T-cell (primary cell): ENCODE measurements at regions of chr3 and their contacts with region 1.

Region 1: DNA sequence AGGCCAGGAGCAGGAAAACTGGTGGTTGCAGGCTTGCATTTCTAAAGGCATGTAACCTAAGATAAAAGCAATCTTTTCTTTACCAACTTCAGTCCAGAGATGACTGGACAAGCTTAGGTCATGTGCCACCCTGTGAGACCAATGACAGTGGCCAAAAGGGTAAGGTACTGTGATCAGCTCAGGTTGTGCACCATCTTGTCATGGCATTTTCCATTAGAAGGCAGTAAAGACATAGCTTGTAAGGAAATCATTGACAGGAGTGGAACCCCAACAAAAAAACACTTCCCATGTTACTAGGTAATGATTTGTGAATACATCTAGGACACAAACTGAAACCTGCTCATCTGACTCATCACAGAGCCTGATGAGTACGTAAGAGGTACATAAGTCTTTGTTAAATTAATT is 35.2 kb downstream of the SSR3 start:
- DNase-seq: no peak
- ATAC-seq: no peak
- H3K4me3 ChIP-seq: no peak overlapping the region
- H3K4me3 Mint-ChIP-seq: no peak overlapping the region
- H3K27ac ChIP-seq: no peak overlapping the region
- H3K27ac Mint-ChIP-seq: no peak overlapping the region
- H3K4me1 ChIP-seq: peaks cover 2 to 5% of the 10 kb centered on the region in 2 experiments
- H3K4me1 Mint-ChIP-seq: peaks cover 12 to 17% (median 12%) of the 10 kb centered on the region in 3 donors
- H3K27me3 ChIP-seq: peaks cover 0 to 7% of the 10 kb centered on the region in 2 experiments
- H3K27me3 Mint-ChIP-seq: peaks cover 20 to 30% of the 10 kb centered on the region in 2 donors

Region 2: GRCh38 chr3:156498307-156498706 is 21.5 kb before region 1 on chr3:
- CTCF ChIA-PET with region 1: no interaction called
- POLR2A ChIA-PET with region 1: no interaction called
- DNase-seq: no peak
- ATAC-seq: no peak
- H3K4me3 ChIP-seq: no peak overlapping the region
- H3K4me3 Mint-ChIP-seq: no peak overlapping the region
- H3K27ac ChIP-seq: no peak overlapping the region
- H3K27ac Mint-ChIP-seq: no peak overlapping the region
- H3K4me1 ChIP-seq: no peaks in the 10 kb centered on the region
- H3K4me1 Mint-ChIP-seq: peaks cover 0 to 5% (median 0%) of the 10 kb centered on the region in 3 donors
- H3K27me3 ChIP-seq: no peaks in the 10 kb centered on the region
- H3K27me3 Mint-ChIP-seq: peaks cover 9 to 10% of the 10 kb centered on the region in 2 donors

Region 3: DNA sequence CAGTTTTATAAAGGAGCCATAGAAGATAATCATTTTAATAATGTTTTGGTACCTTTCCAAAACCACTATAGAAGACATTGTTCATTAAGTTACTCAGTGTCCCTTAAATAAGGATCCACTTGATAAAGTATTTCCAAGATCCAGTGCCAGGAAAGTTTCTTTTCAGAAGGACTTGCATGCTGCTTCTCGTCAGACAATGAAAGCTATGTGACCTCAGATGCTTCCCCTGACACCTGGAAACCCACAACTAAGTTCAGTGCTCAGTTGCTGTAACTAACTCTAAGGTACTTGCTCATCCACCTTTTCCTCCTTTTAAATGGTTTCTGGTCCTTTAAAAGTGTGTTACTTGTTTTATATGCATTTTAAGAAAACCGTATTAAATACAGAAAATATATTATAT is 27.9 kb after region 1 on chr3:
- CTCF ChIA-PET with region 1: interaction called in 1 of 2 experiments, 8 read pairs
- POLR2A ChIA-PET with region 1: interaction called in 1 of 2 experiments, 12 read pairs
- DNase-seq: no peak
- ATAC-seq: no peak
- H3K4me3 ChIP-seq: no peak overlapping the region
- H3K4me3 Mint-ChIP-seq: no peak overlapping the region
- H3K27ac ChIP-seq: no peak overlapping the region
- H3K27ac Mint-ChIP-seq: no peak overlapping the region
- H3K4me1 ChIP-seq: no peaks in the 10 kb centered on the region
- H3K4me1 Mint-ChIP-seq: peaks cover 46 to 63% (median 49%) of the 10 kb centered on the region in 3 donors
- H3K27me3 ChIP-seq: no peaks in the 10 kb centered on the region
- H3K27me3 Mint-ChIP-seq: no peaks in the 10 kb centered on the region

Region 4: GRCh38 chr3:156633335-156633734 is 113.6 kb after region 1 on chr3:
- CTCF ChIA-PET with region 1: no interaction called
- POLR2A ChIA-PET with region 1: no interaction called
- DNase-seq: no peak
- ATAC-seq: no peak
- H3K4me3 ChIP-seq: no peak overlapping the region
- H3K4me3 Mint-ChIP-seq: no peak overlapping the region
- H3K27ac ChIP-seq: no peak overlapping the region
- H3K27ac Mint-ChIP-seq: no peak overlapping the region
- H3K4me1 ChIP-seq: no peaks in the 10 kb centered on the region
- H3K4me1 Mint-ChIP-seq: no peaks in the 10 kb centered on the region
- H3K27me3 ChIP-seq: no peaks in the 10 kb centered on the region
- H3K27me3 Mint-ChIP-seq: no peaks in the 10 kb centered on the region

Region 5: GRCh38 chr3:156648086-156648485 is 128.3 kb after region 1 on chr3:
- CTCF ChIA-PET with region 1: no interaction called
- POLR2A ChIA-PET with region 1: interaction called in 1 of 2 experiments, 15 read pairs
- DNase-seq: no peak
- ATAC-seq: no peak
- H3K4me3 ChIP-seq: no peak overlapping the region
- H3K4me3 Mint-ChIP-seq: no peak overlapping the region
- H3K27ac ChIP-seq: no peak overlapping the region
- H3K27ac Mint-ChIP-seq: no peak overlapping the region
- H3K4me1 ChIP-seq: peaks cover 12% of the 10 kb centered on the region in 2 experiments
- H3K4me1 Mint-ChIP-seq: peaks cover 10 to 14% (median 12%) of the 10 kb centered on the region in 3 donors
- H3K27me3 ChIP-seq: no peaks in the 10 kb centered on the region
- H3K27me3 Mint-ChIP-seq: peaks cover 0 to 4% of the 10 kb centered on the region in 2 donors